Head of caudate nucleus (tissue), 42 donors: ENCODE measurements at regions of chr2 and their contacts with region 1.

Region 1: GRCh38 chr2:235614900-235615712 is 121.3 kb downstream of the AGAP1 start:
- DNase-seq: peak; percentile 78 to 97 (median 90)

Region 2: GRCh38 chr2:235639428-235639773 is 24.3 kb after region 1 on chr2:
- intact Hi-C with region 1: loop called (anchors 2 kb)
- DNase-seq: peak; percentile 67 to 96 (median 90)

Region 3: GRCh38 chr2:235698028-235698427 is 82.9 kb after region 1 on chr2:
- intact Hi-C with region 1: no loop called
- DNase-seq: peak in 3 of 42 donors; percentile 12 to 25 (median 17)